ENCODE measurements at regions of chr15 and their contacts with region 1.

Region 1: GRCh38 chr15:50862553-50862952 is 45.9 kb upstream of the AP4E1 start:
- DNase-seq: no peak
- H3K27ac ChIP-seq: no peak overlapping the region
- CTCF ChIP-seq: no peak

Region 2: DNA sequence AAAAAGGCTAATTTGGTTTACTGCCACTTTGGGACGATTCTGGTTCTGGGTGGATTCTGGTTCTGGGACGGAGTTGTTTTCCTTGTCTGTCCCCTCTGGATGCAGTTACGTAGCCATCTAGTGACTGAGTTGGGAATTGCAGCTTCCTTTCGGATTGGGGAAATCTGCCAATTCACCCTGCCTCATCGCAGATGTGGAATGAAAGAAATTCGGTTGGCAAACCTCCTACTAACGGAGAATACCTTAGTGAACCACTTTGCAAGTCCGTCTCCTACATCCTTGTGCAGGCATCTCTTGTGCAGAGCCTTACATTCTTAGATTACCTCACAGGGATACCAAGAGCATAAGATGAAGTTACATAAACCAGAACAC is 14.4 kb after region 1 on chr15:
- CTCF ChIA-PET with region 1: interaction called, 11 read pairs
- POLR2A ChIA-PET with region 1: no interaction called
- DNase-seq: peak; percentile 85
- H3K27ac ChIP-seq: no peak overlapping the region
- CTCF ChIP-seq: peak; percentile 99

Region 3: GRCh38 chr15:51299187-51300066 is 436.9 kb after region 1 on chr15:
- CTCF ChIA-PET with region 1: no interaction called
- POLR2A ChIA-PET with region 1: no interaction called
- DNase-seq: no peak
- H3K27ac ChIP-seq: no peak overlapping the region
- CTCF ChIP-seq: no peak

Measured in RWPE1 (cell line).